Common myeloid progenitor, CD34-positive (primary cell): ENCODE measurements at regions of chr2 and their contacts with region 1.

Region 1: GRCh38 chr2:63488118-63488713 is 100.1 kb downstream of the WDPCP start:
- DNase-seq: peak; percentile 30 to 62 (median 55)
- H3K4me3 ChIP-seq: no peak overlapping the region
- H3K27ac ChIP-seq: no peak overlapping the region
- H3K4me1 ChIP-seq: no peaks in the 10 kb centered on the region
- H3K27me3 ChIP-seq: no peaks in the 10 kb centered on the region

Region 2: GRCh38 chr2:63078852-63079606 is 409.2 kb before region 1 on chr2:
- CTCF ChIA-PET with region 1: interaction called, 13 read pairs
- POLR2A ChIA-PET with region 1: no interaction called
- DNase-seq: peak in 2 of 3 donors; percentile 52 to 58
- H3K4me3 ChIP-seq: no peak overlapping the region
- H3K27ac ChIP-seq: no peak overlapping the region
- H3K4me1 ChIP-seq: no peaks in the 10 kb centered on the region
- H3K27me3 ChIP-seq: peaks cover 0 to 4% (median 0%) of the 10 kb centered on the region in 5 experiments